Panc1 (cell line): ENCODE measurements at regions of chr9 and their contacts with region 1.

Region 1: GRCh38 chr9:35774907-35775635 is 16.3 kb upstream of the NPR2 start:
- DNase-seq: no peak
- ATAC-seq: peak; percentile 28; the same call in 1 of the 2 replicates
- H3K4me3 ChIP-seq: no peak overlapping the region
- H3K27ac ChIP-seq: no peak overlapping the region
- H3K4me1 ChIP-seq: peaks cover 8% of the 10 kb centered on the region
- H3K27me3 ChIP-seq: no peaks in the 10 kb centered on the region
- CTCF ChIP-seq: no peak

Region 2: GRCh38 chr9:35814841-35815543 is 39.9 kb after region 1 on chr9 and contains the start of gene HINT2:
- CTCF ChIA-PET with region 1: no interaction called
- POLR2A ChIA-PET with region 1: interaction called, 11 read pairs
- in situ Hi-C with region 1: no loop called
- intact Hi-C with region 1: no loop called
- DNase-seq: peak; percentile 91
- ATAC-seq: peak; percentile 94
- H3K4me3 ChIP-seq: peak within 1 kb of the TSS; percentile 88 to 90
- H3K27ac ChIP-seq: peak within 1 kb of the TSS; percentile 85
- H3K4me1 ChIP-seq: peaks cover 29% of the 10 kb centered on the region
- H3K27me3 ChIP-seq: peaks cover 3% of the 10 kb centered on the region; the same call in 1 of the 2 replicates
- CTCF ChIP-seq: no peak
- total RNA-seq, gene HINT2: 75.6 TPM

Region 3: DNA sequence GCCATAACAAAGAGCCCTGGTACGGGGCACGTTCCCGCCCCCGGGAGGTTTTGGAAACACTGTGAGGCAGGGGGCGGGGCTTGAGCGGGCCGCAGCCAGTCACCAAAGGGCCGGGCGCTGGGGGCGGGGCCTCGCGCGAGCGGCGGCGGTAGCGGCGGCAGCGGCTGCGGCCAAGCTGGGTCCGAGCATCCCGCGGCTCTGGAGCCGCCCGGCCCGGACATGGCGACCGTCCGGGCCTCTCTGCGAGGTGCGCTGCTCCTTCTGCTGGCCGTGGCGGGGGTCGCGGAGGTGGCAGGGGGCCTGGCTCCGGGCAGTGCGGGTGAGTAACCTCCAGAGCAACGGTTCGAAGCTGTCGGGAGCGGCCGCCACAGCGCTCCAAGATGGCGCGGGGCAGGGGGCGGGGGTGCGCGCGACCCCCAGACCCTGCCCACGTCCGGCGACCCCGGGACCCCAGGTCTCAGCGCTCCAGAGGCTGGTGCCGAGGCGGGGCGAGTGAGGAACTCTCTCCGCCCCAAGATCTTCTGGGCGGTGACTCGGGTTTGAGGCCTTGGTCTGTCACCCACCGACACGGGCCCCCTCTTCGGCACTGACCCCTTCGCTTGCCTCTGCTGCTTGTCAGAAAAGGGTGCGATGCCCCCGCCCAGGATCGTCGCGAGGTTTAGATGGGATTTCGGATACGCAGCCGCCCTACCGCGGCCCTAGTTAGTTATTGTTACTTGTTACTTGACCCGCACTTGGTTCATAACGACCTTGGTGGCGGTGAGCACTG is 261.9 kb after region 1 on chr9 and contains the start of gene RECK:
- CTCF ChIA-PET with region 1: no interaction called
- POLR2A ChIA-PET with region 1: no interaction called
- in situ Hi-C with region 1: no loop called
- intact Hi-C with region 1: no loop called
- DNase-seq: peak; percentile 30
- ATAC-seq: peak; percentile 98
- H3K4me3 ChIP-seq: peak within 1 kb of the TSS; percentile 61 to 75
- H3K27ac ChIP-seq: peak within 1 kb of the TSS; percentile 82
- H3K4me1 ChIP-seq: peaks cover 9% of the 10 kb centered on the region
- H3K27me3 ChIP-seq: peaks cover 7% of the 10 kb centered on the region
- CTCF ChIP-seq: no peak
- total RNA-seq, gene RECK: 13.2 TPM